ENCODE measurements at regions of chr5 and their contacts with region 1.

Region 1: DNA sequence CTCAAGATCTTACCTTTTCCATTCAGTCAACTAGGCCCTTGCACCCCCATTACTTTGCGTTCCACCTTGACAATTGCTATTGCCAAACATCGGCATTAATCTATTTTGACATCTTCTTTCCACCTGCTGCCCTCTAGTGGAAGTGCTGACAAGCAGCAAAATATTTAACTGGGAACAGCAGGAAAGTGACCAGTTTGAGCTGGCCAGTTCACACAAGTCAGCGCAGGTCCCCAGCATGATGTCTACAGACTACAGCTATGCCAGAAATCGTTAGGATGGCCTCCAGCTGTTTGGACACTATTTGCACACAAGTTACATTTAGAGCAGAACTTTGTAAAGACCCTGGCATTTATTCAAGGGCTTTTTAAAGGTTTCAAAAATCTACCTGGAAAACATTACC is 160.1 kb downstream of the GHR start:
- DNase-seq: peak in 4 of 5 donors; percentile 22 to 36 (median 30)
- H3K4me3 ChIP-seq: no peak overlapping the region
- H3K4me3 Mint-ChIP-seq: no peak overlapping the region
- H3K27ac ChIP-seq: no peak overlapping the region
- H3K27ac Mint-ChIP-seq: peak overlapping the region in 1 of 7 donors; percentile 1
- H3K4me1 ChIP-seq: no peaks in the 10 kb centered on the region
- H3K4me1 Mint-ChIP-seq: peaks cover 0 to 6% (median 2%) of the 10 kb centered on the region in 4 donors
- H3K27me3 ChIP-seq: no peaks in the 10 kb centered on the region
- H3K27me3 Mint-ChIP-seq: peaks cover 9% of the 10 kb centered on the region in 2 donors

Region 2: DNA sequence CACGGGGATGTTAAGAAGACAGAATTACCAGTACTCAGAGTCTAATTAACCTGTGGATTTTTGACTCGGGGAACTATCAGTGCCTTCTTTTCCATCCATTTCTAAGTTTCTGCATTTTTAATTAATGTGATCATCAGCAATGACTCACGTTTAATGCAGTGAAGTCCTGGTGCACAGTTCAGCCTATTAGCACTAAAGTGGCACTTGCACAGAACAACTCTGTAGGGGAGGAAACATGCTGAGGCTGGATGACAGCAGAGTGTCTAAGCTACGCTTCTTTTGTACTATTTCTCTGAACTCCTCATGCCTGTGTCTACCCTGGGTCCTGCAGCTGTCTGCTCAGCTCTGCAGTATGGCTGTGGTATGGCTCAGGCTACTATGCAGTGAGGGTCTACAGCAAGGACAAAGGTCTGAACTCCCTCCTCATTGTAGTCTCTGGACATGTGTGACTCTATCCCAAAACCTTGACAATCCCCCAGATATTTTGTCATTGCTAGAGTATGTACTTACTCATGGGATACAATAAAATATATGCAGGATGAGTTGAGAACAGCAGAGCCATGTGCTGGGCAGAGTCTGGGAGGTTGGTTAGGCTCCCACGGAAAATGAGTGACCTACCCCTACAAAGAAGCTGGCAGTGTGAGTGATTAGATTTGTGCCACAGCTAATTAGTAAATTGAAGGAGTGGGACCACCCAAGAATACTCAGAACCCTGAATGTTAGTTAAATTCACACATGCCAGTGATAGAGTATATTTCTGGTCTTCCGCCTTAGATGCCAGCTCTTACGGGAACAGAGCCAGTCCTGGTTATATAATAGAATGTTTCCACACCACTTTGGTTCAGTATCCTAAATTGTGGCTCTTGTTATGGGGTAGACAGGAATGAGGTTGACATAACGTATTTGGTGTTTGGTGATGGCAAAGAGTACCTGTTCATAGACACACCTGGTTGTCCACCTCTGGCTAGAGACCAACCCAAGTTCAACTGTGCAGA is 12.1 kb before region 1 on chr5:
- CTCF ChIA-PET with region 1: interaction called, 31 read pairs
- POLR2A ChIA-PET with region 1: no interaction called
- intact Hi-C with region 1: no loop called
- DNase-seq: no peak
- H3K4me3 ChIP-seq: no peak overlapping the region
- H3K4me3 Mint-ChIP-seq: no peak overlapping the region
- H3K27ac ChIP-seq: no peak overlapping the region
- H3K27ac Mint-ChIP-seq: no peak overlapping the region
- H3K4me1 ChIP-seq: no peaks in the 10 kb centered on the region
- H3K4me1 Mint-ChIP-seq: no peaks in the 10 kb centered on the region
- H3K27me3 ChIP-seq: peaks cover 7% of the 10 kb centered on the region
- H3K27me3 Mint-ChIP-seq: peaks cover 8 to 10% of the 10 kb centered on the region in 2 donors

Region 3: DNA sequence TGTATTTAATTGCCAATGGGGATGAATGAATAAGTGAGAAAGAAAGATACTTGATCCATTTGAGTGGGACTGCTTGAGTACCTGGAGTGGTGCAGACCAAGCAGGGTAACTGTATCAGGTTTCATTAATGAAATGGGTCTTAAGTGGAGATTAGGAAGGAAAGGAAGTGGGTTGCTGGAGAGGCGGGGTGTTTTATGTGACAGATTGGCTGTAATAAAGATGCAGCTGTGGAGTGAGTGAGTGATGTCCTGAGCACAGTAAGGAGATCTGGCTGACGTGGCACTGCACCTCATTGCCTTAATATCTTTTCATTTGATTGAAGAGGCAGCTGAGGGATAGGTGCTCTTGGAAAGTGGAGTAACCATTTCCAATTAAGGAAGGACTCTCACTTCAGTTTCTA is 12.3 kb after region 1 on chr5:
- CTCF ChIA-PET with region 1: interaction called, 28 read pairs
- POLR2A ChIA-PET with region 1: no interaction called
- intact Hi-C with region 1: no loop called
- DNase-seq: no peak
- H3K4me3 ChIP-seq: no peak overlapping the region
- H3K4me3 Mint-ChIP-seq: no peak overlapping the region
- H3K27ac ChIP-seq: no peak overlapping the region
- H3K27ac Mint-ChIP-seq: no peak overlapping the region
- H3K4me1 ChIP-seq: no peaks in the 10 kb centered on the region
- H3K4me1 Mint-ChIP-seq: peaks cover 0 to 1% (median under 1%) of the 10 kb centered on the region in 4 donors
- H3K27me3 ChIP-seq: no peaks in the 10 kb centered on the region
- H3K27me3 Mint-ChIP-seq: peaks cover 2 to 10% of the 10 kb centered on the region in 2 donors

Region 4: DNA sequence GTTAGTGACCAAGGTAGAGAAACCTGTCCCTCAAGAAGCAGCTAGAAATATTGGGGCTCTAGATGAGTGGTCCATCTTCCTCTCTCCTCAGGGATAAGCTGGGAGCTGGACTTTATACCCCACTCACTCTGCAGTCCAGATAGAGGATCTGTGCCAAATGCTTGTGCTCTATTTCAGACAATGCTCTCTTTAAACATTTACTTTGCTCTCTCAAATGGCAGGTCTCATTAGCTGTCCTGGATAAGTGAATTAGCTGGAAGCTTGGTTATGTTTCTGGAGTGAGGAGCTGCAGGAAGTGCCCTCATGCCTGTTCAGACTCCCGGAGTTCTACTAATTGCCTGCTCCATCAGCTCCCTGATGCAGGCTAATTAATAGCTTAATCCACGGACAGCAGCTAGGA is 22.2 kb after region 1 on chr5:
- CTCF ChIA-PET with region 1: interaction called, 15 read pairs
- POLR2A ChIA-PET with region 1: no interaction called
- intact Hi-C with region 1: no loop called
- DNase-seq: no peak
- H3K4me3 ChIP-seq: no peak overlapping the region
- H3K4me3 Mint-ChIP-seq: no peak overlapping the region
- H3K27ac ChIP-seq: no peak overlapping the region
- H3K27ac Mint-ChIP-seq: no peak overlapping the region
- H3K4me1 ChIP-seq: no peaks in the 10 kb centered on the region
- H3K4me1 Mint-ChIP-seq: no peaks in the 10 kb centered on the region
- H3K27me3 ChIP-seq: no peaks in the 10 kb centered on the region
- H3K27me3 Mint-ChIP-seq: peaks cover 4 to 15% of the 10 kb centered on the region in 2 donors

Region 5: GRCh38 chr5:42656651-42657015 is 73.3 kb after region 1 on chr5:
- CTCF ChIA-PET with region 1: no interaction called
- POLR2A ChIA-PET with region 1: no interaction called
- intact Hi-C with region 1: no loop called
- DNase-seq: no peak
- H3K4me3 ChIP-seq: no peak overlapping the region
- H3K4me3 Mint-ChIP-seq: peak overlapping the region in 4 of 8 donors; percentile 20 to 47 (median 36)
- H3K27ac ChIP-seq: no peak overlapping the region
- H3K27ac Mint-ChIP-seq: no peak overlapping the region
- H3K4me1 ChIP-seq: no peaks in the 10 kb centered on the region
- H3K4me1 Mint-ChIP-seq: no peaks in the 10 kb centered on the region
- H3K27me3 ChIP-seq: no peaks in the 10 kb centered on the region
- H3K27me3 Mint-ChIP-seq: peaks cover 1 to 6% of the 10 kb centered on the region in 2 donors

Region 6: GRCh38 chr5:42889311-42889933 is 306.1 kb after region 1 on chr5:
- CTCF ChIA-PET with region 1: interaction called, 14 read pairs
- POLR2A ChIA-PET with region 1: no interaction called
- intact Hi-C with region 1: loop called (anchors 1 kb)
- DNase-seq: peak in 4 of 5 donors; percentile 48 to 54 (median 51)
- H3K4me3 ChIP-seq: no peak overlapping the region
- H3K4me3 Mint-ChIP-seq: no peak overlapping the region
- H3K27ac ChIP-seq: no peak overlapping the region
- H3K27ac Mint-ChIP-seq: no peak overlapping the region
- H3K4me1 ChIP-seq: no peaks in the 10 kb centered on the region
- H3K4me1 Mint-ChIP-seq: no peaks in the 10 kb centered on the region
- H3K27me3 ChIP-seq: no peaks in the 10 kb centered on the region
- H3K27me3 Mint-ChIP-seq: peaks cover 7 to 8% of the 10 kb centered on the region in 2 donors